IMR-90 (cell line): ENCODE measurements at regions of chr4 and their contacts with region 1.

Region 1: DNA sequence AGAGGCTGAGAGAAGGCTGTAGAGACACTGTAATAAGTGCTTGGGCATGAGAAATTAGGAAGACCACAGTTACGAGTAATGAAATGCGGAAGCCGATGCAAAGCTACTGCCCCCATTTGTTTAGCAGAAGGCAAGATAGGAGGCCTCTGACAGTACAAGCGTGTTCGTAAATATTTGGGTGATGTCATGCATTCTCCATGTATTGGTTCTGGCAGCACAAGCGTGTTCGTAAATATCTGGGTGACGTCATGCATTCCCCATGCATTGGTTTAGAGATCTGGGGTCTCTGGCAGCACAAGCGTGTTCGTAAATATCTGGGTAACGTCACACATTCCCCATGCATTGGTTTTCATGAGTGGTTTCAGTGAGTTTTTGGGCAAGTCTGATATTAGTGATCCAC is 661.5 kb upstream of the FRG1 start:
- DNase-seq: peak; percentile 99
- ATAC-seq: peak; percentile 92
- H3K4me3 ChIP-seq: no peak overlapping the region
- H3K27ac ChIP-seq: peak overlapping the region; percentile 63; the same call in 1 of the 2 replicates
- H3K4me1 ChIP-seq: peaks cover 8% of the 10 kb centered on the region
- H3K27me3 ChIP-seq: no peaks in the 10 kb centered on the region
- CTCF ChIP-seq: no peak
- POLR2A ChIP-seq: no peak
- RAD21 ChIP-seq: no peak

Region 2: DNA sequence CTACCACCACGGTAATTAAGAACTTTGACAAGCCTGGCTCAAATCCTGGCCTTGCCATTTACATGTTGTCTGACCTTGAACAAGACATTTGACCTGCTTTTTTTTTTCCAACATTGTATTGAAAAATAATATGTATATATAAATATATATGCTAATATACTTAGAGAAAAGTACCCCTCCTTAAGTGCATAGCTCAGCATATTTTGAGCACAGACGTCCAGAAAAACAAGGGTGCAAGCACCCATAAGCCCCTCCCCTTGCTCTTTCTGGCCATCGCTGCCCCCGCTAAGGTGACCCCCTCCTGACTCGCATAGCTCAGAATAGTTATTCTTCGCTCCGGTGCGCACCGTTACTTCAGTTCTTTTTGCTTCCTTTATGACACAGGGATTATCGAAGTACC is 80.6 kb before region 1 on chr4:
- CTCF ChIA-PET with region 1: no interaction called
- POLR2A ChIA-PET with region 1: no interaction called
- dilution Hi-C with region 1: no loop called
- in situ Hi-C with region 1: no loop called
- intact Hi-C with region 1: no loop called
- DNase-seq: no peak
- ATAC-seq: no peak
- H3K4me3 ChIP-seq: no peak overlapping the region
- H3K27ac ChIP-seq: no peak overlapping the region
- H3K4me1 ChIP-seq: peaks cover 4% of the 10 kb centered on the region
- H3K27me3 ChIP-seq: no peaks in the 10 kb centered on the region
- CTCF ChIP-seq: no peak
- POLR2A ChIP-seq: no peak
- RAD21 ChIP-seq: no peak

Region 3: GRCh38 chr4:189265515-189265914 is 13.7 kb before region 1 on chr4:
- CTCF ChIA-PET with region 1: no interaction called
- POLR2A ChIA-PET with region 1: no interaction called
- dilution Hi-C with region 1: no loop called
- in situ Hi-C with region 1: no loop called
- intact Hi-C with region 1: loop called (anchors 1 kb)
- DNase-seq: no peak
- ATAC-seq: no peak
- H3K4me3 ChIP-seq: no peak overlapping the region
- H3K27ac ChIP-seq: no peak overlapping the region
- H3K4me1 ChIP-seq: no peaks in the 10 kb centered on the region; the same call in 1 of the 2 replicates
- H3K27me3 ChIP-seq: no peaks in the 10 kb centered on the region
- CTCF ChIP-seq: no peak
- POLR2A ChIP-seq: no peak
- RAD21 ChIP-seq: no peak

Region 4: DNA sequence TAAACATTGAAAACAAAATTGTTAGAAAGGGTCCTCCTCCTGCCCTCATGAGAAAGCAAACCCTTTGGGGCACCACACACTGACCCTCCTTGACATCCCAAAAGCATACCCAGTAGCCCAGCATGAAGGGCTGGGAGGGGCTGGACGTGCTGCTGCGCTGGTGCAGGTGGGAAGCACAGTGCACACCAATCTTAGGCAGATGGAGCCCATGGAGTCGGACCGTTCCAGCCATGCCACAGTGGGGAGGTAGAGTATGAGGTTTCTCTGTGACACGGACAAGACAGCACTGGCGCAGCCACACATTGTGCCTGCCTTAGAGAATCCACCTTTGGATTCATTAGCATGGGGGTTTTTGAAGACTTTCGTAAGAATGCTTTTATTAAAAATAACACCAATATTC is 117.2 kb after region 1 on chr4:
- CTCF ChIA-PET with region 1: no interaction called
- POLR2A ChIA-PET with region 1: no interaction called
- dilution Hi-C with region 1: no loop called
- in situ Hi-C with region 1: no loop called
- intact Hi-C with region 1: no loop called
- DNase-seq: no peak
- ATAC-seq: no peak
- H3K4me3 ChIP-seq: no peak overlapping the region
- H3K27ac ChIP-seq: no peak overlapping the region
- H3K4me1 ChIP-seq: no peaks in the 10 kb centered on the region
- H3K27me3 ChIP-seq: no peaks in the 10 kb centered on the region
- CTCF ChIP-seq: no peak
- POLR2A ChIP-seq: no peak
- RAD21 ChIP-seq: no peak